ENCODE measurements at regions of chr7 and their contacts with region 1.

Region 1: GRCh38 chr7:151123822-151124464 is 37.7 kb downstream of the AGAP3 start:
- DNase-seq: peak; percentile 85
- H3K4me3 Mint-ChIP-seq: no peak overlapping the region
- H3K27ac Mint-ChIP-seq: no peak overlapping the region
- H3K4me1 Mint-ChIP-seq: no peaks in the 10 kb centered on the region
- H3K27me3 Mint-ChIP-seq: no peaks in the 10 kb centered on the region

Region 2: GRCh38 chr7:151091431-151091830 is 32.5 kb before region 1 on chr7:
- CTCF ChIA-PET with region 1: interaction called, 15 read pairs
- POLR2A ChIA-PET with region 1: no interaction called
- intact Hi-C with region 1: no loop called
- DNase-seq: peak; percentile 53
- H3K4me3 Mint-ChIP-seq: no peak overlapping the region
- H3K27ac Mint-ChIP-seq: no peak overlapping the region
- H3K4me1 Mint-ChIP-seq: peaks cover 28% of the 10 kb centered on the region
- H3K27me3 Mint-ChIP-seq: no peaks in the 10 kb centered on the region

Region 3: DNA sequence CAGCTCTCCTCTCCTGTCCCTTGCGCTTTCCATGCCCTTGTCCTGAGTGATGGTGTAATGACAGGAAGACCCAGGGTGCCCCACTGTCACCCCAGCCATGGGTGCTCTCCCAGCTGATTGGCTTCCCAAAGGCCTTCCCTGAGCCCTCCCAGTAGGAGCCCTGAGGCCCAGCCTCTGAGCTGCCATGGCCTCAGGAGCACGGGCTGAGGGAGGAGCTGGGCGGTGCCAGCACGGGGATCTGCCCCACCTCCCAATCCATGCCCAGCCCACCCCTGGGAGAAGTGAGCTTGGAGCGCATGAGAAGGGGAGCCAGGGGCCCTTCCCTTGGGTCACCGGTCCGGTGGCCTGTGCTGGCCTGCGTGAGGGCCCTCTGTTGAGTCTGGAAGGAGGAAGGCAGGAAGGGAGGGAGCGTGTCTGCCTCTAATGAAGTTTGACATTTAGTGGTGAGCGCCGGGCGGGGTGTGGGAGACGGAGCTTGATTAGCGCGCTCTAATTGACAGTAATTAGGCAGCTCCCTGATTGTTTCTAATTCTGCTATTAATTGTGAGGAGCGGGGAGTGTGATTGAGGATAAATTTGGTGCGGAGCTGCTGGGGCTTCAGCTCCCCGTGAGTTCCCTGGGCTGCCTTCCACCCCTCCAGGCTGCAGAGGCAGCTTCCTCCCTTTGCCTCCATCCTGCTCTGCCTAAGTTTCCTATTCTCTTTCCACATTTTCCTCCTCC is 15.3 kb after region 1 on chr7:
- CTCF ChIA-PET with region 1: interaction called, 10 read pairs
- POLR2A ChIA-PET with region 1: no interaction called
- intact Hi-C with region 1: no loop called
- DNase-seq: no peak
- H3K4me3 Mint-ChIP-seq: no peak overlapping the region
- H3K27ac Mint-ChIP-seq: no peak overlapping the region
- H3K4me1 Mint-ChIP-seq: no peaks in the 10 kb centered on the region
- H3K27me3 Mint-ChIP-seq: no peaks in the 10 kb centered on the region

Region 4: DNA sequence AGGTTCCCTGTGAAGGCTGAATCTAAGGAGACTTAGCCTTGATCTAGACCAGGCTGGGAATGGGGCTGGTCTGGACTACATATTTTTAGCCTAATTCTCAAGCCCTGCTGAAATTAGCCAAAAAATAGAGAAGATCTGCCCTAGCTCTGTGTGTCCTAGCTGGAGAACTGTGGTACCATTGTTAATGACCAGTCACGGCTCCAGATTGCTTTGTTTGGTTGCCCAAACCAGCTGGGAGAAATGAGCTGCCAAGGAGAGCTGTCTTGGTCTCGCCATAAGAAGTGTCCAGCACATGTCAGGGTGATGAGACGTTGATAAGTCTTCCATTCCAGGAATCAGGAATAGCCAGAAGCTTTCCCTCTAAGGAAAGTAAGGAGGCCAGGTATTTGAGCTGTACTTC is 22.8 kb after region 1 on chr7:
- CTCF ChIA-PET with region 1: interaction called, 19 read pairs
- POLR2A ChIA-PET with region 1: no interaction called
- intact Hi-C with region 1: no loop called
- DNase-seq: no peak
- H3K4me3 Mint-ChIP-seq: no peak overlapping the region
- H3K27ac Mint-ChIP-seq: no peak overlapping the region
- H3K4me1 Mint-ChIP-seq: no peaks in the 10 kb centered on the region
- H3K27me3 Mint-ChIP-seq: peaks cover 3% of the 10 kb centered on the region

Region 5: GRCh38 chr7:151304856-151305255 is 180.9 kb after region 1 on chr7:
- CTCF ChIA-PET with region 1: interaction called, 9 read pairs
- POLR2A ChIA-PET with region 1: no interaction called
- intact Hi-C with region 1: loop called (anchors 1 kb)
- DNase-seq: no peak
- H3K4me3 Mint-ChIP-seq: peak overlapping the region; percentile 34
- H3K27ac Mint-ChIP-seq: no peak overlapping the region
- H3K4me1 Mint-ChIP-seq: peaks cover 9% of the 10 kb centered on the region
- H3K27me3 Mint-ChIP-seq: peaks cover 20% of the 10 kb centered on the region